ENCODE measurements at regions of chr3 and their contacts with region 1.

Region 1: GRCh38 chr3:72068621-72069020 is 283.7 kb upstream of the PROK2 start:
- DNase-seq: no peak
- CTCF ChIP-seq: no peak

Region 2: GRCh38 chr3:72054960-72055359 is 13.7 kb before region 1 on chr3:
- CTCF ChIA-PET with region 1: interaction called, 14 read pairs
- POLR2A ChIA-PET with region 1: no interaction called
- DNase-seq: no peak
- CTCF ChIP-seq: no peak

Region 3: GRCh38 chr3:72353236-72354128 is 284.9 kb after region 1 on chr3:
- CTCF ChIA-PET with region 1: no interaction called
- POLR2A ChIA-PET with region 1: no interaction called
- DNase-seq: no peak
- CTCF ChIP-seq: no peak

Measured in GM10248 (cell line).